Colonic mucosa (tissue), 4 donors: ENCODE measurements at regions of chr4 and their contacts with region 1.

Region 1: DNA sequence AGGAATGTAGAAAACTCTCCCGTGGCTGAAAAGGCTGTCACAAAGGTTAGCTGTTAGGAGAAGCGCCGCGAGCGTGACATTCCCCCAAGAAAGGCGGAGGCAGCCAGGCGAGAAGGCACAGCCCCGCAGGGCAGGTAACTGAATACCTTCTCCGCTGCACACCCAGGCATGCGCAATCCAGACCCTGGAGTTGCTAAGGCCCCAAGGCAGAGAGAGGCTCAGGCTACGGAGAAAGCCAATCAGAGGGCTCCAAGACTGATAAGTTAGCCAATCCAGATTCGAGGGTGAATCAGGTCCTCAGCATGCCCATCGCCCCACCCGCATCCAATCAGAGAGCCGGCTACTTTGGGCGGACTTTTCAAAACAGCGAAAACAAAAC is 485 bp upstream of the CCNG2 start:
- DNase-seq: peak; percentile 98
- H3K4me3 ChIP-seq: peak overlapping the region; percentile 98
- H3K27ac ChIP-seq: peak overlapping the region; percentile 98
- H3K4me1 ChIP-seq: no peaks in the 10 kb centered on the region
- H3K27me3 ChIP-seq: no peaks in the 10 kb centered on the region
- CTCF ChIP-seq: no peak

Region 2: GRCh38 chr4:77075869-77076799 is 80.4 kb before region 1 on chr4 and contains the start of gene CCNI:
- intact Hi-C with region 1: loop called (anchors 10 kb)
- DNase-seq: peak; percentile 95
- H3K4me3 ChIP-seq: peak within 1 kb of the TSS; percentile 68
- H3K27ac ChIP-seq: peak within 1 kb of the TSS; percentile 98
- H3K4me1 ChIP-seq: peaks cover 16% of the 10 kb centered on the region
- H3K27me3 ChIP-seq: no peaks in the 10 kb centered on the region
- CTCF ChIP-seq: no peak
- total RNA-seq, gene CCNI: 159 to 260 TPM

Region 3: GRCh38 chr4:77120886-77121508 is 35.5 kb before region 1 on chr4:
- intact Hi-C with region 1: no loop called
- DNase-seq: no peak
- H3K4me3 ChIP-seq: no peak overlapping the region
- H3K27ac ChIP-seq: no peak overlapping the region
- H3K4me1 ChIP-seq: no peaks in the 10 kb centered on the region
- H3K27me3 ChIP-seq: no peaks in the 10 kb centered on the region
- CTCF ChIP-seq: no peak